ENCODE measurements at regions of chr3 and their contacts with region 1.

Region 1: DNA sequence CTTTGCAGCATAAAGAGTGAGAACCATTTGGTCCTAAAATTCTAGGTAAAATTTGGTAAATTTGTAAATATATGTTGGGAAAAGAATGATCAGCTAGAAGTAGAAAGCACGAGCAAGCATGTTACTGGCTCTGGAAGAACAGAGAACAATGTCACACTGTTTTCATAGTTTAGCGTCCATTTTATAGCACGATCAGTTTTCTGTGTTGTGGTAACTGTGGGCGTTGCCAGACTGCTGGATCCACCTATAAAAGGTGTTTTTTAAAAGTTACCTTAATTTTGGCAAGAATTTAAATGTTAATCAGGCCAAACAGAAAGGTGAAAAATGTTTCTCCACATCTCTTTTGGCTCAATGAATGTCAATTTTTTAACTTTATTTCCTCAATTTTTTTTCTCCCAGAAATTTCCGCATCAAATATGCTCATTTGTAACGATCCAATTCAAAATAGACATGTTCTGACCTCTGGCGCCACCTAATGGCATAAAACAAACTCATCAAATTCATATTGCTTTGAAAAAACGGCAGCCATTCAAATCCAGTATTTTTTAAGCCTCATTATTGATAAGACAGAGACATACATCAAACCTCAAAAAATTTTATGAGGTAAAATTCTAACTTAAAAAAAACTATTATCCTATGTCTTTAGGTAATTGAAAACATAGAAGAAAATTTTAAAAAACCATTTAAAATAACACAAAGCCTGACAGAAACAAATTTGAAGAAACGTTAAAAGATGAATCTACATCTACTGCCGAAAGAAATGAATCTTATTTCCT is 5.5 kb upstream of the GP5 start:
- DNase-seq: no peak
- CTCF ChIP-seq: peak; percentile 57

Region 2: DNA sequence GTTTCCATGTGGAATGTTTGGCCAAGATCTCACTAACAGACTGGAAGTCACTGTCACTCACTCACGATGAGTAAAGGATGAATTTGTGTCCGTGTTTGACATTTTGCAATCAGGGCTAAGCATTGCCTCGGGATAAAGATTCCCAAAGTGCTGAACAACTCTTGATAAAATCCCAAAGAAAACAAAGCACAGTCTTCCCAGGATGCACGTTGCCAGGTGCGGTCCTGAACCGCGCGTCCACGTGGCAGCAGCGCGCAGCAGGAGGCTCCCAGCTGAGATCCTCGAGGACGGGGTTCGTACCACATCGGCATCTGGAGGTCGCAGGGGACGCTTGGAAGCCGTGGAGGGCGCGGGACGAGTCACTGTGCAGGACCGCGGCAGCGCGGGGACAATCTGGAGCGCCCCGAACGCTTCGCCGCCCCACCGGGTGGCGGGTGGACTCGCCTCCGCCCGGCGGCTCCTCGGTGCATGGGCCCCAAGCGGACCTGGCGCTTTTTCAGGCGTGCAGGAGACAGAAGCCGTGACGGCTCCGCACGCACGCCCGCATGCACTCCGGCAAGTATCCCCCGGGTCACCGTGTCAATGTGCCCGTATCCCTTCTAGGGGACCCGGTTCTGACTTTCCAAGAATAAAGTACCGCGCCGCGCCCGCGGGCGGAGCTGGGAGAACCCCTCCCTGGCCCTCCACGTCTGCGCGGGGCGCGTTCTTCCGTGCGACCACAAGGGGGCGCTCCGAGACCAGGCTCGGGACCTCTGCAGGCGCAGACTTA is 71.2 kb before region 1 on chr3:
- CTCF ChIA-PET with region 1: interaction called, 12 read pairs
- POLR2A ChIA-PET with region 1: no interaction called
- DNase-seq: peak; percentile 87
- CTCF ChIP-seq: peak; percentile 99